ENCODE measurements at regions of chr19 and their contacts with region 1.

Region 1: GRCh38 chr19:3075895-3076431 is 13.7 kb upstream of the TLE5 start:
- DNase-seq: no peak
- H3K4me3 ChIP-seq: no peak overlapping the region
- CTCF ChIP-seq: peak in 1 of 3 donors; percentile 65
- POLR2A ChIP-seq: no peak

Region 2: DNA sequence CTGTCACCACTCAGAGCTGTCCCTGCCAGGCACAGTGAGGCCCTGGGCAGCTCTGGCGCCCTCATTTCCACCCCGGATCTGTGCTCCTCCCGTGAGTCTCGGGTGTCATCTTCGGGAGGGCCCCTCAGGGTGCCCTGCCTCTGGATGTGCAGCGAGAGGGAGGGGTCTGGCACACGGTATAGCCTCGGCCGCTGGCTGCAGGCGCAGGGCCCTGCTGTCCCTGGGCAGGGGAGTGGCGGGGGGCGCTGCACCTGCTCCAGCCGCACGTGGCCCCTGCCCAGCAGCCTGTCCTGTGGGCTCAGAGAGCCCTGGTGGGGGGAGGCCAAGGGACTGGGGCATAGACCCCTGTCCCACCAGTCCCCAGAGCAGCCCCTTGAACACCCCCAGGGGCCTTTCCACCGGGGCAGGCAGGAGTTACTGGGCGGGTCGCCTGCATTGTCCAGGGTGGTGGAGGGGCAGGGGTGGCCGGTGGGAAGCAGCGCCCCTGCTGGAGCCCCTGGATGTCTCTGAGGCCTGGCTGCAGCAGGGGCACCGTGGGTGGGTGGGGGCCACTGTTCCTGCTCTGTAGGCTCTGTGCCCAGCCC is 44.2 kb after region 1 on chr19:
- intact Hi-C with region 1: loop called (anchors 5 kb)
- DNase-seq: no peak
- H3K4me3 ChIP-seq: no peak overlapping the region
- CTCF ChIP-seq: no peak
- POLR2A ChIP-seq: no peak

Region 3: GRCh38 chr19:3163230-3163886 is 87.4 kb after region 1 on chr19:
- intact Hi-C with region 1: loop called (anchors 10 kb)
- DNase-seq: no peak
- H3K4me3 ChIP-seq: no peak overlapping the region
- CTCF ChIP-seq: peak in 1 of 3 donors; percentile 32
- POLR2A ChIP-seq: no peak

Measured in lower leg skin (tissue), 4 donors.